Breast epithelium (tissue), 4 donors: ENCODE measurements at regions of chr2 and their contacts with region 1.

Region 1: DNA sequence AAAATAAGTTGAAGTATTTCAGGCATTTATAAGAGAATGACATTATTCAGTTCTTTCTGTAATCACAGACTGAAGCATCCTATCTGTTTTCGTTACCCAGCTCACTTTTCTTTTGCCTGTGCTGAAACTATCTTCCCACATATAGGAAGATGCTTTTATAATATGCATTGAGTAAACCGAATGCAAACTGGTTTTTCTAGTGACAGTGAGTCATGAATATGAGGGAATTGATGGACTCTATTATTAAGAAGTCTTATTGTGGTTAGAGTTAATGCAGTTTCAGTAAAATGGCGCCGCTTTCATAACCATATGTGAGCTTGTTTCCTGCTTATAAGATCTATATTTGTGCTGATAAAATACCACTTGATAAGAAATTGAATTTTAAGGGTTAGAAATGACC is 59.2 kb downstream of the ACVR2A start:
- DNase-seq: no peak
- H3K4me3 ChIP-seq: no peak overlapping the region
- H3K27ac ChIP-seq: no peak overlapping the region
- H3K4me1 ChIP-seq: no peaks in the 10 kb centered on the region
- H3K27me3 ChIP-seq: no peaks in the 10 kb centered on the region
- CTCF ChIP-seq: no peak
- POLR2A ChIP-seq: no peak

Region 2: DNA sequence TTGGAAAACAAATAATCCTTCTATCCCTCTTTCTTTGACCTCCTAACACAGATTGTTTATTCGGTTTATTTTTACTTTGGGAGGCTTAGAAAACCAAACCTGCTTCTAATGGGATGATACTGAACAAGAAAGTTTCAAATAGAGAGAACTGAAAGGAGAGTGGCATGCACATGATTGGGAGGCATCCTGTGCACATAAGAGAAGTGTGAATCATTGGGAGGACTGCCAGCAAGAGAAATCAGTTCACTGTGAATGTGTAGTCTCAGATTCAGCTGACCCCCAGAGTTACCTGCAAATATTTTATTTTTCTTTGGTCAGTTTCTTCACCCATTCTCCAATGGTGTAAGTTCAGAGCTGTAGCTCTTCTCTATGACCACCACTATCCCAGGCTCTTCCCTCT is 1422.4 kb before region 1 on chr2:
- intact Hi-C with region 1: no loop called
- DNase-seq: no peak
- H3K4me3 ChIP-seq: no peak overlapping the region
- H3K27ac ChIP-seq: no peak overlapping the region
- H3K4me1 ChIP-seq: no peaks in the 10 kb centered on the region
- H3K27me3 ChIP-seq: no peaks in the 10 kb centered on the region
- CTCF ChIP-seq: no peak
- POLR2A ChIP-seq: no peak

Region 3: DNA sequence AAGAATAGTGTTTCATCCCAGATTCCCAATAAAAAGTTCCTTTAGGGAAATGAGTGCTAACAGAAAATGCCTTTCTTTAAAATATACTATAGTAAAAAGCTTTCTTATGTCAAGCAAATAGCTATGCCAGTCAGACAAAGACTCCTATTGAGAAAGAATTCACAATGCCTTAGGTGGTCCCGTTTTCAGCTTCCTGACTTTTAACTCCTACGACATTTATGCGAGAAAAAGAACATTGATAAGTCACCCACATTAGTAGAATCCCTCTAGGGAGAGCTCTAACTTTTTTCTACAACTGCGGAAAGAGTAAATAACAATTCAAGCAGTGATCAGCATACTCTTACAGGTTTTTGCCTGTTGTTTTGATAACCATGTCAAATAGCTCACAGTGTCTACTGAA is 810.0 kb before region 1 on chr2:
- intact Hi-C with region 1: loop called (anchors 5 kb)
- DNase-seq: no peak
- H3K4me3 ChIP-seq: no peak overlapping the region
- H3K27ac ChIP-seq: no peak overlapping the region
- H3K4me1 ChIP-seq: no peaks in the 10 kb centered on the region
- H3K27me3 ChIP-seq: no peaks in the 10 kb centered on the region
- CTCF ChIP-seq: no peak
- POLR2A ChIP-seq: no peak

Region 4: GRCh38 chr2:147843864-147844696 is 60.0 kb before region 1 on chr2:
- intact Hi-C with region 1: loop called (anchors 2 kb)
- DNase-seq: peak; percentile 83 to 89
- H3K4me3 ChIP-seq: peak overlapping the region; percentile 77 to 91 (median 80)
- H3K27ac ChIP-seq: peak overlapping the region; percentile 96 to 99
- H3K4me1 ChIP-seq: no peaks in the 10 kb centered on the region
- H3K27me3 ChIP-seq: no peaks in the 10 kb centered on the region
- CTCF ChIP-seq: peak in 2 of 3 donors; percentile 24 to 26
- POLR2A ChIP-seq: no peak